MCF 10A (cell line): ENCODE measurements at regions of chr14 and their contacts with region 1.

Region 1: GRCh38 chr14:100108042-100108825 is 43.0 kb downstream of the EVL start:
- DNase-seq: peak; percentile 81
- H3K4me3 Mint-ChIP-seq: peak overlapping the region; percentile 18
- H3K27ac Mint-ChIP-seq: peak overlapping the region; percentile 70
- H3K4me1 Mint-ChIP-seq: peaks cover 41% of the 10 kb centered on the region
- H3K27me3 Mint-ChIP-seq: no peaks in the 10 kb centered on the region
- CTCF ChIP-seq: peak; percentile 89

Region 2: DNA sequence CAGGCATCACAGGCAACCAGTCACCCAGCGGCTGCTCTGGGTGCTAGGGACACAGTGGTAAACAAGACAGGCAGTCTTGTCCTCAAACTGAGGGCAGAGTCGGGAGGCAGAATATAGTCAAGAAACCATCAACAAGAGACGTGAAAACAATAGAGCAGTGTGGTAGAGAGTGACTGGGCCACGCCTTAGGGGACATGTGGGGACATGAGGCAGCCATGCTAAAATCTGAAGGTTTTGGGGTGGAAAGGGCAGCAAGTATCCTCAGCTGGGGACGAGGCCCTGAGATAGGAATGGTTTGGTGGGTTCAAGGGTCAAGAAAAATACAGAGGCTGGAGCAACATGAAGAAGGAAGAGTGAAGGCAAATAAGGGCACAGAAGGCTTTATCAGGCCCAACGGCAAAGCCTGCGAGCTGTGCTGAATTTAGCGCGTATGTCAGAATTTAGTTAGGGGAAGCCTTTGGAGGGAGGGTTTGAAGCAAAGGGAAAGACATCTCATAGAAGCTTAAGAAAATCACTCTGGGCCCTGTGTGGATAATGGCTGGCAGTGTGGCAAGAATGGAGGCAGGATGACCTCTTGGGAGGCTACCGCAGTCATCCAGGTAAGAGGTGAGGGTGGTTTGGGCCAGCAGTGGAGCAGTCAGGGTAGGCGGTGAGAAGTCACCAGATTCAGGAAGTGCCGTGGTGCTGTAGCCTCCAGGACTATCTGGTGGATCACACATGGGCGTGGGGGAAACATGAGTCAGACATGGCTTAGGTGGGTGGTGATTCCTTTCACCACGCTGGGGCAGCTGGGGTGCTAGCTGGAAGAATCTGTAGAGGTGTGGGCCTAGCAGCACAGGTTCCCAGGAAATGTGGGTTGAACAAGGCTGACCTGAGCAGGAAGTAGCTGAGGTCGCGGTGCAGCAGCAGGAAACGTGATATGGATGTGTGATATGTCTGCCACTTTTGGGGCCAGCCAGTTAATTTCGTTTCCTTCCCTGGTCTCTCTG is 40.0 kb before region 1 on chr14:
- CTCF ChIA-PET with region 1: interaction called, 188 read pairs
- POLR2A ChIA-PET with region 1: interaction called, 16 read pairs
- intact Hi-C with region 1: loop called (anchors 1 kb)
- DNase-seq: peak; percentile 73
- H3K4me3 Mint-ChIP-seq: no peak overlapping the region
- H3K27ac Mint-ChIP-seq: peak overlapping the region; percentile 78
- H3K4me1 Mint-ChIP-seq: peaks cover 29% of the 10 kb centered on the region
- H3K27me3 Mint-ChIP-seq: no peaks in the 10 kb centered on the region
- CTCF ChIP-seq: no peak

Region 3: GRCh38 chr14:100078991-100079725 is 29.1 kb before region 1 on chr14:
- CTCF ChIA-PET with region 1: interaction called, 188 read pairs
- POLR2A ChIA-PET with region 1: interaction called, 10 read pairs
- intact Hi-C with region 1: loop called (anchors 1 kb)
- DNase-seq: peak; percentile 47
- H3K4me3 Mint-ChIP-seq: no peak overlapping the region
- H3K27ac Mint-ChIP-seq: no peak overlapping the region
- H3K4me1 Mint-ChIP-seq: peaks cover 31% of the 10 kb centered on the region
- H3K27me3 Mint-ChIP-seq: no peaks in the 10 kb centered on the region
- CTCF ChIP-seq: no peak

Region 4: GRCh38 chr14:100091386-100091785 is 16.8 kb before region 1 on chr14:
- CTCF ChIA-PET with region 1: interaction called, 19 read pairs
- POLR2A ChIA-PET with region 1: interaction called, 21 read pairs
- intact Hi-C with region 1: no loop called
- DNase-seq: no peak
- H3K4me3 Mint-ChIP-seq: no peak overlapping the region
- H3K27ac Mint-ChIP-seq: no peak overlapping the region
- H3K4me1 Mint-ChIP-seq: peaks cover 6% of the 10 kb centered on the region
- H3K27me3 Mint-ChIP-seq: no peaks in the 10 kb centered on the region
- CTCF ChIP-seq: no peak

Region 5: GRCh38 chr14:100096570-100096971 is 11.7 kb before region 1 on chr14:
- CTCF ChIA-PET with region 1: interaction called, 19 read pairs
- POLR2A ChIA-PET with region 1: interaction called, 21 read pairs
- intact Hi-C with region 1: no loop called
- DNase-seq: peak; percentile 86
- H3K4me3 Mint-ChIP-seq: no peak overlapping the region
- H3K27ac Mint-ChIP-seq: peak overlapping the region; percentile 81
- H3K4me1 Mint-ChIP-seq: peaks cover 40% of the 10 kb centered on the region
- H3K27me3 Mint-ChIP-seq: no peaks in the 10 kb centered on the region
- CTCF ChIP-seq: no peak

Region 6: DNA sequence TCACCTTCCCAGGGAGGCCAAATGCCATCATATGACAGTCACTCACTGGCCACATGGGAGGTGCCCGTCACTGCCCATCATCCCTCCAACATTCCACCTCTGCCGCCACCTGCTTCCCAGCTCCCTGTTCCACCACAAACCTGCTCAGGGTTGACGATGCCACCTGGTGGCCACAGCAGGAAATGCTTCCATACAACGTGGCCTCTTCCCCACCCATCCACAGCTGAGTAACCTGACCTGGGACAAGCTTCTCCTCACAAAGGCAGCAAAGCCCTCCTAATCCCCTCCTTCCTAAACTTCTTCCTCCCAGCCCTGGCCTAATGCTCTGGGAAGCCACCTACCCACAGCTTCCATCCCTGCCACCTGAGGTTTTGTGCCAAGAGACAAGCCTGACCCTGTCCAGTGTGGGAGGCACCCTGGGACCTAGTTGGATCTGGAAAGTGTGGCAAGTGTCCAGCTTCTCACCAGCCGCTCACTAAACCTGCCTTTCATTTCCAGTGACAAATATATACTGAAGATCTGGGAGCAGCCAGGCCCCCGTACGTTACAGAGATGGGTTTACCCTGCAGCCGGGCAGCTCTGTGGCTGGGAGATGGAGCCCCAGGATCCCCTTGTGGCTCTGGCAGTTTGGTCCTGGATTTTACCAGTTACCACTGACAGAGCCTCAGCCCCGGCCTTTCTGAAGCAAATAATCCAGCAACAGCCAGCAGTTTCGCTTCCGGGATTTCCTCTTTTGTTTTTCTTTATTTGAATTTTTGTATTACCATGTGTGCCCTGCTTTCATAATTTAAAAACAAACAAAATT is 47.0 kb after region 1 on chr14:
- CTCF ChIA-PET with region 1: interaction called, 13 read pairs
- POLR2A ChIA-PET with region 1: no interaction called
- intact Hi-C with region 1: no loop called
- DNase-seq: peak; percentile 45
- H3K4me3 Mint-ChIP-seq: no peak overlapping the region
- H3K27ac Mint-ChIP-seq: no peak overlapping the region
- H3K4me1 Mint-ChIP-seq: no peaks in the 10 kb centered on the region
- H3K27me3 Mint-ChIP-seq: no peaks in the 10 kb centered on the region
- CTCF ChIP-seq: peak; percentile 71

Region 7: GRCh38 chr14:100446572-100446971 is 338.3 kb after region 1 on chr14:
- CTCF ChIA-PET with region 1: no interaction called
- POLR2A ChIA-PET with region 1: no interaction called
- intact Hi-C with region 1: no loop called
- DNase-seq: no peak
- H3K4me3 Mint-ChIP-seq: no peak overlapping the region
- H3K27ac Mint-ChIP-seq: no peak overlapping the region
- H3K4me1 Mint-ChIP-seq: peaks cover 6% of the 10 kb centered on the region
- H3K27me3 Mint-ChIP-seq: no peaks in the 10 kb centered on the region
- CTCF ChIP-seq: no peak